ENCODE measurements at regions of chrX and their contacts with region 1.

Region 1: GRCh38 chrX:15468036-15468435 is 25.1 kb downstream of the PIR start:
- DNase-seq: peak; percentile 18 to 50
- ATAC-seq: peak; percentile 71 to 79 (median 73)
- H3K4me3 ChIP-seq: no peak overlapping the region
- H3K27ac ChIP-seq: peak overlapping the region; percentile 40
- H3K4me1 ChIP-seq: peaks cover 6% of the 10 kb centered on the region
- H3K27me3 ChIP-seq: no peaks in the 10 kb centered on the region
- CTCF ChIP-seq: peak; percentile 17

Region 2: GRCh38 chrX:15349046-15349445 is 119.0 kb before region 1 on chrX:
- intact Hi-C with region 1: loop called (anchors 2 to 5 kb)
- DNase-seq: no peak
- ATAC-seq: peak; percentile 55 to 91 (median 66)
- H3K4me3 ChIP-seq: no peak overlapping the region
- H3K27ac ChIP-seq: no peak overlapping the region
- H3K4me1 ChIP-seq: no peaks in the 10 kb centered on the region
- H3K27me3 ChIP-seq: peaks cover 0 to 2% (median 0%) of the 10 kb centered on the region in 3 donors
- CTCF ChIP-seq: peak; percentile 56

Measured in psoas muscle (tissue), 8 donors.